Activated CD8-positive, alpha-beta T cell treated with anti-CD3 and anti-CD28 coated beads, Interleukin-2, amount 10 ng/mL, durations not matched to agents 7 days and 5 days (primary cell): ENCODE measurements at regions of chr6 and their contacts with region 1.

Region 1: DNA sequence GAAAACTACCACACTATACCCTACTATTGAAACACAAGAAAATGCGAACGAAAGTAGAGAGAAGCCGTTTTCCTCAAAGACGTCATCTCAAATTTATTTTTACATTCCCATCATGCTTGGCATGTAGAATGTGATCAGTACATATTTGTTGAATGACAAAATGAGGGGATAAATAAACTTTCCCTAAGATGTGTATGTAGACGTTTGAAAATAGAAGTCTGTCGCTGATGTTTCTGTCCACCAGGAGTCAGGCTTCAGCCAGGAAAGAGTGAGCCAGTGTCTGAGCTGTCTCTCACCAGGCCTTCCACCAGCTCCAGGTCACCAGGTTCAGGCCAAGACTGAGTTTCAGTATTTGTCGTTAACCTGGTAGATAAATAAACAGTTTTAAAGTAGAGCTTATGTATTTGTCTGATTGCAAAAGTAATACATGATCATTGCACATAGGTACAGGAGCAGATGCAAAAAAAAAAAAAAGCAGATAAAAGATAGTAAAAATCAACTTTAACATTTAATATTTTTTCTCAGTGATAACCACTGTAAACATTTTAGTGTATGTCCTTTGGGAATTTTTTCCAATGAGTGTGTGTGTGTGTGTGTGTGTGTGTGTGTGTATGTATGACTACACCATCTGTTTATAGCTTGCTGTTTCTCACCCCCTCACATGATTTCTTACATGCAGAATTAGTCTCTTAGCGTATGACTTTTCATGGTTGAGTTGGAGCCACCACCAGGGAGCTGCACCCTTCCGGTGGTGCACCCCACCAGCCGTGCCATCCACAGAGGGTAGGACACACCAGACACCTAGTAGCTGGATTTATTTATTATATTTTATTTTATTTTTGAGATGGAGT is 26.2 kb downstream of the WRNIP1 start:
- DNase-seq: peak; percentile 74
- ATAC-seq: peak; percentile 76
- H3K4me3 Mint-ChIP-seq: no peak overlapping the region
- H3K27ac Mint-ChIP-seq: peak overlapping the region; percentile 47
- H3K4me1 Mint-ChIP-seq: peaks cover 31% of the 10 kb centered on the region
- H3K27me3 Mint-ChIP-seq: no peaks in the 10 kb centered on the region

Region 2: DNA sequence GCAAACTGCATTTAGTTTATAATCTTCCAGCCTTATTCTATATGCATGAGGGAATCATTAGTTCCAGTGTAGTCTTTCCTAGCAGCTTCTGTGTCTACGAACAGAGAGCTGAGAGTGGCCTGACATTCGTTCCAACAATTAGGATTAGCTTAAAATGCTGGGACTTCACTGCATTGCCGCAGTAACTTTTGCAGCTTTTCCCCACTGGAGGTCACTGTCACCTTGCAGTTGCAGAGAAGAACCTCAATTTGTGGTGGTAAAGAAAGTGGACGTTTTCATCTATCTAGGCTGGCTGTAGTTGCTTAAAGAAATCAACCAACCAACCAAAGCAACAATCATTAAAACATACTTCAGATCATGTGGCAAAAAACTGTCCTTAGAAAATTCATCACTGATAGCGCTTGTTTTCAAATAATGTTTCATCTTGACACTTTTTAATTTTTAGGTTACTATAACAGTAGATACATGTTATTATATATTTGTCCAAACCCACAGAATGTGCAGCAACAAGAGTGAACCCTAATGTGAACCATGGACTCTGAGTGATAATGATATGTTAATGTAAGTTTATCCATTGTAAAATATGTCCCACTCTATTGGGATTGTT is 52.9 kb before region 1 on chr6:
- CTCF ChIA-PET with region 1: interaction called, 13 read pairs
- POLR2A ChIA-PET with region 1: no interaction called
- DNase-seq: peak; percentile 69
- ATAC-seq: peak; percentile 46
- H3K4me3 Mint-ChIP-seq: no peak overlapping the region
- H3K27ac Mint-ChIP-seq: no peak overlapping the region
- H3K4me1 Mint-ChIP-seq: peaks cover 7% of the 10 kb centered on the region
- H3K27me3 Mint-ChIP-seq: peaks cover 4% of the 10 kb centered on the region

Region 3: DNA sequence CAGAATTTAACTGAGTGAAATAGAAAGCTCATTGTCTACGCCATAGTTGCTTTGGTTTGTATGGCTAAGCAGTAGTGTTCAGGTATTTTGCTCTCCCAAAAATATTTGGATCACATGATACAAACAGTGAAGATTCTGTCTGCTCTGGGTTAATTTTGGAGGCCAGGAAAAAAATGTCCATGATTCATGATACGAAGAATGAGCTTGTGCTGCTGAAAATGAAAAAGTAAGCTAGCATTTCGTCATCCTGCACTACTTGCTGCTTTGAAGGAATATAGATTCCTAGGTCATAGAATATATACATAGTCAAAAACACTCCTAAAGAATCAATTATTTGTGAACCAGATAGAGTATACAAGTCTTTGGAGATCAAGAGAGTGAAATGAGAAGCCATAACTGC is 17.9 kb before region 1 on chr6:
- CTCF ChIA-PET with region 1: interaction called, 31 read pairs
- POLR2A ChIA-PET with region 1: no interaction called
- DNase-seq: no peak
- ATAC-seq: no peak
- H3K4me3 Mint-ChIP-seq: no peak overlapping the region
- H3K27ac Mint-ChIP-seq: no peak overlapping the region
- H3K4me1 Mint-ChIP-seq: peaks cover 36% of the 10 kb centered on the region
- H3K27me3 Mint-ChIP-seq: no peaks in the 10 kb centered on the region

Region 4: DNA sequence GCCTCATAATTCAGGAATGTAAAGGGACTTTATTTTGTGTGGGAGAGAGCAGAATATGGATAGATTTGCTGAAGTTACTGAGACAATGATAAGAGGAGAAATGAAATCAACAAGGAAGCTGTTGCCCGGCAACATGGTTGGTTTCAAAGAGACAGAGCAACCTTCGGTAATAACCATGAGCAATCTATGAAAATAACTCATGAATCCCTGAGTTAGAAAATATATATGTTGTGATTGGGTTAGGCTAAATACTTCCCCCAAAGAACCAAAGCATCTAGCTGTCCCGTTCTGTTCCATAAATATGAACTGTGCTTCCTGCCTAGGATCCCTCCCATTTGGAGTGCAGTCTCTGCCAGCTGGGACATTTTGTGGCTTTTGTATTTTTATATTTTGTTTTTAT is 27.2 kb after region 1 on chr6:
- CTCF ChIA-PET with region 1: interaction called, 11 read pairs
- POLR2A ChIA-PET with region 1: no interaction called
- DNase-seq: no peak
- ATAC-seq: no peak
- H3K4me3 Mint-ChIP-seq: no peak overlapping the region
- H3K27ac Mint-ChIP-seq: no peak overlapping the region
- H3K4me1 Mint-ChIP-seq: peaks cover 25% of the 10 kb centered on the region
- H3K27me3 Mint-ChIP-seq: peaks cover 2% of the 10 kb centered on the region

Region 5: GRCh38 chr6:2841264-2842138 is 50.2 kb after region 1 on chr6 and contains the start of gene SERPINB1:
- CTCF ChIA-PET with region 1: interaction called, 79 read pairs
- POLR2A ChIA-PET with region 1: interaction called, 10 read pairs
- DNase-seq: peak; percentile 86
- ATAC-seq: peak; percentile 86
- H3K4me3 Mint-ChIP-seq: peak within 1 kb of the TSS; percentile 78
- H3K27ac Mint-ChIP-seq: peak within 1 kb of the TSS; percentile 78
- H3K4me1 Mint-ChIP-seq: peaks cover 58% of the 10 kb centered on the region
- H3K27me3 Mint-ChIP-seq: no peaks in the 10 kb centered on the region
- total RNA-seq, gene SERPINB1: 55.1 to 57.1 TPM

Region 6: DNA sequence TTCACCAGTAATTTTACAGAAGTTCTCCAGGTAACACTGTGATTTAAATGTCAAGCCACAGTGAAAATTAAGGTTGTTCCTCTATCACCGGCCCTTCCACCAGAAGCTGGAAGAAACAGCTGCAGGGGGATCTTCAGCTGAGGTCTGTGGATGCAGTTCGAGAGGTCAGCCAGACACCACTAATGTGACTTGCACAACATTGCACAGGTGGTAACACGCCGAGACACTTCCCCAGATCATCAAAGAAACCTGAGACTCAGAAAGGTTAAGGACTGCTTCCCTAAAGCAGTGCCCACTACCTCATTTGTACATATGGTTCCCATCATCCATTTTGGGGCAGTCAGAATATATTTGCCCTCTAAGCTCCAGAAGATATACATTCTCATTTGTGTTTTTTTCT is 119.8 kb after region 1 on chr6:
- CTCF ChIA-PET with region 1: interaction called, 24 read pairs
- POLR2A ChIA-PET with region 1: no interaction called
- DNase-seq: no peak
- ATAC-seq: no peak
- H3K4me3 Mint-ChIP-seq: no peak overlapping the region
- H3K27ac Mint-ChIP-seq: no peak overlapping the region
- H3K4me1 Mint-ChIP-seq: peaks cover 41% of the 10 kb centered on the region
- H3K27me3 Mint-ChIP-seq: no peaks in the 10 kb centered on the region

Region 7: GRCh38 chr6:2931970-2932748 is 140.8 kb after region 1 on chr6:
- CTCF ChIA-PET with region 1: interaction called, 69 read pairs
- POLR2A ChIA-PET with region 1: no interaction called
- DNase-seq: peak; percentile 91
- ATAC-seq: peak; percentile 91
- H3K4me3 Mint-ChIP-seq: no peak overlapping the region
- H3K27ac Mint-ChIP-seq: no peak overlapping the region
- H3K4me1 Mint-ChIP-seq: peaks cover 22% of the 10 kb centered on the region
- H3K27me3 Mint-ChIP-seq: no peaks in the 10 kb centered on the region